PC-9 (cell line): ENCODE measurements at regions of chr7 and their contacts with region 1.

Region 1: GRCh38 chr7:129468087-129468486 is 33.9 kb downstream of the STRIP2 start:
- DNase-seq: peak in 1 of 2 experiments; percentile 92
- H3K4me3 ChIP-seq: no peak overlapping the region
- H3K27ac ChIP-seq: peak overlapping the region; percentile 80
- H3K4me1 ChIP-seq: peaks cover 45% of the 10 kb centered on the region
- H3K27me3 ChIP-seq: no peaks in the 10 kb centered on the region
- CTCF ChIP-seq: no peak

Region 2: GRCh38 chr7:129218514-129219062 is 249.5 kb before region 1 on chr7:
- CTCF ChIA-PET with region 1: interaction called, 4 read pairs
- POLR2A ChIA-PET with region 1: no interaction called
- intact Hi-C with region 1: loop called (anchors 1 kb)
- DNase-seq: peak; percentile 59 to 82
- H3K4me3 ChIP-seq: no peak overlapping the region
- H3K27ac ChIP-seq: no peak overlapping the region
- H3K4me1 ChIP-seq: peaks cover 4% of the 10 kb centered on the region
- H3K27me3 ChIP-seq: no peaks in the 10 kb centered on the region
- CTCF ChIP-seq: peak; percentile 93

Region 3: GRCh38 chr7:129525225-129525862 is 57.3 kb after region 1 on chr7:
- CTCF ChIA-PET with region 1: no interaction called
- POLR2A ChIA-PET with region 1: no interaction called
- intact Hi-C with region 1: loop called (anchors 2 kb)
- DNase-seq: no peak
- H3K4me3 ChIP-seq: no peak overlapping the region
- H3K27ac ChIP-seq: no peak overlapping the region
- H3K4me1 ChIP-seq: peaks cover 18% of the 10 kb centered on the region
- H3K27me3 ChIP-seq: no peaks in the 10 kb centered on the region
- CTCF ChIP-seq: no peak

Region 4: GRCh38 chr7:129611246-129612111 is 143.4 kb after region 1 on chr7 and contains the start of gene NRF1:
- CTCF ChIA-PET with region 1: no interaction called
- POLR2A ChIA-PET with region 1: no interaction called
- intact Hi-C with region 1: loop called (anchors 1 kb)
- DNase-seq: peak; percentile 67 to 94
- H3K4me3 ChIP-seq: peak within 1 kb of the TSS; percentile 96
- H3K27ac ChIP-seq: peak within 1 kb of the TSS; percentile 75
- H3K4me1 ChIP-seq: peaks cover 29% of the 10 kb centered on the region
- H3K27me3 ChIP-seq: no peaks in the 10 kb centered on the region
- CTCF ChIP-seq: no peak
- total RNA-seq, gene NRF1: 20.5 and 23.2 TPM in 2 replicates

Region 5: DNA sequence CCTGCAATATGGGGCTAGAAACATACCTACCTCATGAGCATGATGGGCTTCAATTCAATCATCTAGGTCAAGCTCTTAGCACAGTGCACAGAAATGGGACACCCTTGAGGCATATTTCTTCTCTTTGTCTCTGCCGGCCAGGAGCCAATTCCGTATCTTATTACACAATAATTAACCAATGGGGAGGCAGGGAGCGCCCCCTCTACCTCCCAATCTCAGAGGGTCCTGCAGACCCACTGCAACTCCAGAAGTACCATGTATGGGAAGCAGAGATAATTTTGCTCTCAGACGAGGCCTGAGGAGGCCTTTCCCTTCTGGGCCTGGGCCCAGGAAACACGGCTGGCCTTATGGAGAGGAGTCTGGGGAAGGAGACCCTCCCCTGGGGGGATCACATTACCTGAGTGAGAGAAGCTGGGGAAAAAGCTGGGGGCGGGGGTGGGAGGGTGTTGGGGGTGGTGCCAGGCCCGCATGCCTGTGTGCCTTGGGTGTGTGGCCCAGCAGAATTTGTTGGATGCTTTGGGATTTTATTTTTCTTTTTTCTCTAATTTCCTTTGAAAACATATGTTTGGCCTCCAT is 329.2 kb after region 1 on chr7:
- CTCF ChIA-PET with region 1: no interaction called
- POLR2A ChIA-PET with region 1: no interaction called
- intact Hi-C with region 1: no loop called
- DNase-seq: no peak
- H3K4me3 ChIP-seq: no peak overlapping the region
- H3K27ac ChIP-seq: no peak overlapping the region
- H3K4me1 ChIP-seq: no peaks in the 10 kb centered on the region
- H3K27me3 ChIP-seq: no peaks in the 10 kb centered on the region
- CTCF ChIP-seq: no peak